Naive thymus-derived CD4-positive, alpha-beta T cell (primary cell): ENCODE measurements at regions of chr6 and their contacts with region 1.

Region 1: GRCh38 chr6:26383624-26384417 is 913 bp downstream of the BTN2A2 start:
- DNase-seq: peak in 1 of 9 donors; percentile 20
- ATAC-seq: peak; percentile 9
- H3K4me3 ChIP-seq: peak overlapping the region; percentile 83
- H3K4me3 Mint-ChIP-seq: peak overlapping the region; percentile 91 to 100 (median 98)
- H3K27ac ChIP-seq: peak overlapping the region; percentile 96
- H3K27ac Mint-ChIP-seq: peak overlapping the region; percentile 81 to 99 (median 95)
- H3K4me1 ChIP-seq: peaks cover 8 to 16% of the 10 kb centered on the region in 2 donors
- H3K4me1 Mint-ChIP-seq: peaks cover 17 to 57% (median 33%) of the 10 kb centered on the region in 7 donors
- H3K27me3 ChIP-seq: no peaks in the 10 kb centered on the region
- H3K27me3 Mint-ChIP-seq: no peaks in the 10 kb centered on the region

Region 2: DNA sequence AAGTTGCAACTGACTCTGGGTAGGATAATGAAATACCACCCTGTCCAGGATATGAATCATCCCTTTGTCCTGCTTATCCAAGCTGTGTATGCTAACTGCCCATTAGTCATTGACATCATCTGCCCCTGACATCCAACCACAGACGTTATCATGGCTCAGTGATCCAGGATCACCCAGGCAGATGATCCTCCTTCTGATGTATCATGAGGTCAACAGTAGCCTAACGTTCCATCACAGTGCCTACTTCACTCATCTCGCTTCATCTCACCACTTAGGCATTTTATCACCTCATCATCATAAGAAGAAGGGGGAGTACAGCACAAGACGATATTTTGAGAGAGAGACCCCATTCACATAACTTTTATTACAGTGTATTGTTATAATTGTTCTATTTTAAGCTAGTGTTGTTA is 32.3 kb before region 1 on chr6:
- CTCF ChIA-PET with region 1: no interaction called
- POLR2A ChIA-PET with region 1: no interaction called
- intact Hi-C with region 1: no loop called
- DNase-seq: no peak
- ATAC-seq: peak; percentile 72
- H3K4me3 ChIP-seq: no peak overlapping the region
- H3K4me3 Mint-ChIP-seq: no peak overlapping the region
- H3K27ac ChIP-seq: no peak overlapping the region
- H3K27ac Mint-ChIP-seq: no peak overlapping the region
- H3K4me1 ChIP-seq: no peaks in the 10 kb centered on the region
- H3K4me1 Mint-ChIP-seq: peaks cover 0 to 8% (median 0%) of the 10 kb centered on the region in 7 donors
- H3K27me3 ChIP-seq: no peaks in the 10 kb centered on the region
- H3K27me3 Mint-ChIP-seq: peaks cover 0 to 7% (median 0%) of the 10 kb centered on the region in 5 donors

Region 3: DNA sequence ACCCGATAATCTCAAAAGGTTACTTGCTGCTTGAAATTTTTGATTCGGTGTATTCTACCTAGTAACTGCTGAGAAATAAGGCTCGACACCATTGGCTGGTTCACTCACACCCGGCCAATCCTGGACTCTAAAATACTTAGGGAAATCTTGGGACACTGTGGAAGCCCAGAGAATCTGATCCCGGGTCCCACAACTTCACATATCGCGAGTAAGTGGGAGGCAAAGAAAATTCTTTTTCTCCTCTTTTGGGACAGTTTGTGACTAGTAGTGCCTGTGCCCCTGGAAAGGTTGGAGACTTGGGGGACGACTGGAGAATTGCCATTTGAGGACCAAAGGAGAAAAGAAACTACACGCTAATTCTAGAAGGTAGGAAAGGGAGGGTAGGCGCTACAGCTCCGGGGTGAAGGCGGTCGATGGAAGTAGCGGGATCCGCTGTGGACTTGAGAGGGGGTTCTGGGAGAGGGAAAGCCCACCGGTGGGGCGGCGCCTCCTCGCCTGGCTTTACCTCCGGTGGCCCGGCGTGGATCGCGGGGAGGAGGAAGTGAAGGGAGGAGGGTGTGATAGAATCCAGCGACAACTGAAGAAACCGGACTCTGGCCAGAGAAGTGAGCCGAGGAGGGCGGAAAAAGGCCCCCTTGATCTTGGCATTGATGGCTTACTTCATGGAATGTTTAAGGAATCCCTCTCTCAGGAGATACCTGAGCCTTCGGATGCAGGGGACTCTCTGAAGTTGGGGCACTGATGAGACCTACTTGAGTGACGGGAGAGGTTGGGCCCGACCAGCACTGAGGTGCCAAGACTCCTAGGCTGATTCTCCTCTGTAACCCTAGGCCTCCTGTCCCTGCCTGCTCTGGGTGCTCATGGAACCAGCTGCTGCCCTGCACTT is 37.7 kb after region 1 on chr6:
- CTCF ChIA-PET with region 1: no interaction called
- POLR2A ChIA-PET with region 1: no interaction called
- intact Hi-C with region 1: loop called in 1 of 2 experiments (anchors 2 kb)
- DNase-seq: peak; percentile 11 to 71 (median 62)
- ATAC-seq: peak; percentile 96
- H3K4me3 ChIP-seq: peak overlapping the region; percentile 79
- H3K4me3 Mint-ChIP-seq: no peak overlapping the region
- H3K27ac ChIP-seq: peak overlapping the region; percentile 71
- H3K27ac Mint-ChIP-seq: peak overlapping the region in 2 of 9 donors; percentile 43 to 79
- H3K4me1 ChIP-seq: peaks cover 5 to 9% of the 10 kb centered on the region in 2 donors
- H3K4me1 Mint-ChIP-seq: peaks cover 0 to 16% (median 3%) of the 10 kb centered on the region in 7 donors
- H3K27me3 ChIP-seq: no peaks in the 10 kb centered on the region
- H3K27me3 Mint-ChIP-seq: no peaks in the 10 kb centered on the region